ENCODE measurements at regions of chr18 and their contacts with region 1.

Region 1: GRCh38 chr18:74251297-74252038 is 40.3 kb downstream of the CYB5A start:
- DNase-seq: no peak
- H3K4me3 ChIP-seq: no peak overlapping the region
- H3K27ac ChIP-seq: no peak overlapping the region
- H3K4me1 ChIP-seq: no peaks in the 10 kb centered on the region
- H3K27me3 ChIP-seq: no peaks in the 10 kb centered on the region
- CTCF ChIP-seq: no peak
- POLR2A ChIP-seq: no peak

Region 2: DNA sequence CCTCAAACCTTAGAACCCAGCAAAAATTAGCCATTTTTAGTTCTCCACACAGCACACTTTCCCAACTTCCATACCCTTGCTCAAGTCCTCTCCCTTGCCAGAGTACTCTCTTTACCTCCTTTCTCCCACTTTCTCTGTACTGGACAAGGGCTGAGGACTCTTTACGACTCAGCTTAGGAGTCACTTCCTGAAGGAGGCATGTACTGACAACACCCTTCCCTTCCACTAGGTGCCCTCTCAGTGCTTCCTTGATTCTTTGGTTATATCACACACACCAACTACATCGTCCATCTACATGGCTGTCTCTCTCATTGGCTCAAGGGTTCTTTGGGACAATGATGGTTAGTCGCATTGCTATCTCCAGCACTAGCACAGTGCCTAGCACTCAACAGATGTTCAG is 58.9 kb after region 1 on chr18:
- intact Hi-C with region 1: no loop called
- DNase-seq: no peak
- H3K4me3 ChIP-seq: no peak overlapping the region
- H3K27ac ChIP-seq: no peak overlapping the region
- H3K4me1 ChIP-seq: no peaks in the 10 kb centered on the region
- H3K27me3 ChIP-seq: no peaks in the 10 kb centered on the region
- CTCF ChIP-seq: peak in 2 of 4 experiments; percentile 32 to 48
- POLR2A ChIP-seq: no peak

Region 3: DNA sequence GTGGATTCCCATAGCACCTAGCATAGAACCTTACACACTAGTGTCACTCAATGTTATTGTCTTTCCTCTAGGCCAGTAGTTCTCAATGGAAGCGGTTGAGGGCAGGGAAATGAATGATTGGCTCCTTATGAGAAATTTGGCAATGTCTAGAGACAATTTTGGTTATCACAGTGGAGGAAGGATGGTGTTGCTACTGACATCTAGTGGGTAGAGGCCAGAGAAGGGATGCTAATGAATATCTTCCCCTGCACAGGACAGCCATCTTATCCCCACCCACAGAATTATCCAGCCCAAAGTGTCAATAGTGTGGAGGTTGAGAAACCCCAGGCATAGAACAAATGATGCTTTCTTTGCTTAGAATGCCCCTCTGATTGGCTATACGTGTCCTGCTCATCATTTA is 79.9 kb after region 1 on chr18:
- intact Hi-C with region 1: loop called (anchors 10 kb)
- DNase-seq: no peak
- H3K4me3 ChIP-seq: no peak overlapping the region
- H3K27ac ChIP-seq: no peak overlapping the region
- H3K4me1 ChIP-seq: no peaks in the 10 kb centered on the region
- H3K27me3 ChIP-seq: no peaks in the 10 kb centered on the region
- CTCF ChIP-seq: peak in 1 of 4 experiments; percentile 36
- POLR2A ChIP-seq: no peak

Measured in prostate gland (tissue), 2 donors.